ENCODE measurements at regions of chr19 and their contacts with region 1.

Region 1: GRCh38 chr19:10000171-10000826 is 10.0 kb downstream of the COL5A3 start:
- DNase-seq: peak; percentile 84
- H3K4me3 ChIP-seq: no peak overlapping the region
- H3K27ac ChIP-seq: no peak overlapping the region
- H3K4me1 ChIP-seq: peaks cover 3% of the 10 kb centered on the region
- H3K27me3 ChIP-seq: no peaks in the 10 kb centered on the region
- CTCF ChIP-seq: peak; percentile 98

Region 2: DNA sequence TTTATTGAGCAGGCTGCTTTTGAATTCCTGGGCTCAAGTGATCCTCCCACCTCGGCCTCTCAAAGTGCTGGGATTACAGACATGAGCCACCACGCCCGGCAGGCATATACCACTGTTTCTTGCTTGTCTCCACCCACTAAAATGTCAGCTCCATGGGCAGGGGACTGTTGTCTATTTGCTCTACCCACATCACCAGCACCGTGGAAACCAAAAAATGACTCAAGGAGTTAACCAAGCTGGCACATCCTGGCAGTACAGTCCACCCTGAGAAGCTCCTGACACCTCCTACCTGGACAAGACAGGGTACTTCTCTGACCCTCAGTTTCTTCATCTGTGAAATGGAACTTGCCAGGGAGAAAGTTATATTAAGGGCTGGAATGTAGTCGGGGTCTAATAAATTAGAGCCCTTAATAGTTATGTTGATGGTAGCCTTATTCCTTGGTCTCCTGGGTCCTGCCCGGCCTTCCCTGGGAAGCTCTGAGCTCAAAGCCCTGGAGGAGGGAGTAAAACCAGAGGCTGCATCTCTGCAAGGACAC is 26.9 kb after region 1 on chr19:
- CTCF ChIA-PET with region 1: interaction called, 22 read pairs
- POLR2A ChIA-PET with region 1: interaction called, 6 read pairs
- intact Hi-C with region 1: no loop called
- DNase-seq: peak; percentile 34
- H3K4me3 ChIP-seq: peak overlapping the region; percentile 3
- H3K27ac ChIP-seq: no peak overlapping the region
- H3K4me1 ChIP-seq: no peaks in the 10 kb centered on the region
- H3K27me3 ChIP-seq: no peaks in the 10 kb centered on the region
- CTCF ChIP-seq: no peak

Region 3: GRCh38 chr19:10289167-10289835 is 289.0 kb after region 1 on chr19:
- CTCF ChIA-PET with region 1: interaction called, 10 read pairs
- POLR2A ChIA-PET with region 1: no interaction called
- intact Hi-C with region 1: no loop called
- DNase-seq: peak; percentile 92
- H3K4me3 ChIP-seq: peak overlapping the region; percentile 47
- H3K27ac ChIP-seq: peak overlapping the region; percentile 44
- H3K4me1 ChIP-seq: peaks cover 56% of the 10 kb centered on the region
- H3K27me3 ChIP-seq: peaks cover 19% of the 10 kb centered on the region
- CTCF ChIP-seq: no peak

Region 4: GRCh38 chr19:10339380-10339960 is 339.2 kb after region 1 on chr19 and contains the start of gene ICAM3:
- CTCF ChIA-PET with region 1: no interaction called
- POLR2A ChIA-PET with region 1: interaction called, 10 read pairs
- intact Hi-C with region 1: no loop called
- DNase-seq: no peak
- H3K4me3 ChIP-seq: no peak within 1 kb of the TSS
- H3K27ac ChIP-seq: no peak within 1 kb of the TSS
- H3K4me1 ChIP-seq: peaks cover 17% of the 10 kb centered on the region
- H3K27me3 ChIP-seq: no peaks in the 10 kb centered on the region
- CTCF ChIP-seq: no peak
- total RNA-seq, gene ICAM3: 2.6 and 3.2 TPM in 2 replicates

Measured in A673 (cell line).